ENCODE measurements at regions of chr15 and their contacts with region 1.

Region 1: GRCh38 chr15:83066734-83067637 is at the start of gene BTBD1:
- DNase-seq: peak; percentile 84
- ATAC-seq: peak; percentile 98
- H3K4me3 ChIP-seq: peak within 1 kb of the TSS; percentile 71 to 92 (median 81)
- H3K27ac ChIP-seq: peak within 1 kb of the TSS; percentile 87
- H3K4me1 ChIP-seq: peaks cover 40% of the 10 kb centered on the region
- H3K27me3 ChIP-seq: no peaks in the 10 kb centered on the region
- CTCF ChIP-seq: peak; percentile 42
- EP300 ChIP-seq: peak in 1 of 2 experiments; percentile 26; a peak in 1 of 4 replicates
- POLR2A ChIP-seq: peak; percentile 90 to 93
- RAD21 ChIP-seq: peak; percentile 17; the same call in 1 of the 2 replicates
- total RNA-seq, gene BTBD1: 53.9 and 73.8 TPM in 2 replicates

Region 2: GRCh38 chr15:83011271-83012075 is 55.5 kb before region 1 on chr15 and contains the start of gene C15orf40:
- CTCF ChIA-PET with region 1: no interaction called
- POLR2A ChIA-PET with region 1: interaction called, 15 read pairs
- in situ Hi-C with region 1: no loop called
- intact Hi-C with region 1: no loop called
- DNase-seq: peak; percentile 81
- ATAC-seq: peak; percentile 96
- H3K4me3 ChIP-seq: peak within 1 kb of the TSS; percentile 63 to 88 (median 66)
- H3K27ac ChIP-seq: peak within 1 kb of the TSS; percentile 63
- H3K4me1 ChIP-seq: peaks cover 33% of the 10 kb centered on the region
- H3K27me3 ChIP-seq: no peaks in the 10 kb centered on the region
- CTCF ChIP-seq: peak; percentile 96
- EP300 ChIP-seq: no peak
- POLR2A ChIP-seq: peak; percentile 77 to 86
- RAD21 ChIP-seq: peak; percentile 61
- total RNA-seq, gene C15orf40: 24.0 and 25.5 TPM in 2 replicates

Region 3: GRCh38 chr15:83100097-83100646 is 33.2 kb after region 1 on chr15:
- CTCF ChIA-PET with region 1: no interaction called
- POLR2A ChIA-PET with region 1: no interaction called
- in situ Hi-C with region 1: no loop called
- intact Hi-C with region 1: no loop called
- DNase-seq: no peak
- ATAC-seq: no peak
- H3K4me3 ChIP-seq: no peak overlapping the region
- H3K27ac ChIP-seq: no peak overlapping the region
- H3K4me1 ChIP-seq: no peaks in the 10 kb centered on the region
- H3K27me3 ChIP-seq: no peaks in the 10 kb centered on the region; a peak in 1 of 5 replicates
- CTCF ChIP-seq: no peak
- EP300 ChIP-seq: no peak
- POLR2A ChIP-seq: no peak
- RAD21 ChIP-seq: no peak

Region 4: GRCh38 chr15:83207622-83208411 is 140.8 kb after region 1 on chr15 and contains the start of gene HDGFL3:
- CTCF ChIA-PET with region 1: no interaction called
- POLR2A ChIA-PET with region 1: no interaction called
- in situ Hi-C with region 1: no loop called
- intact Hi-C with region 1: loop called (anchors 5 kb)
- DNase-seq: no peak
- ATAC-seq: peak; percentile 78
- H3K4me3 ChIP-seq: peak within 1 kb of the TSS in 2 of 3 experiments; percentile 34 to 52; a peak in 3 of 6 replicates
- H3K27ac ChIP-seq: no peak within 1 kb of the TSS
- H3K4me1 ChIP-seq: no peaks in the 10 kb centered on the region
- H3K27me3 ChIP-seq: peaks cover 3 to 35% of the 10 kb centered on the region in 2 experiments; a peak in 4 of 5 replicates
- CTCF ChIP-seq: peak; percentile 23; the same call in 1 of the 2 replicates
- EP300 ChIP-seq: no peak
- POLR2A ChIP-seq: no peak
- RAD21 ChIP-seq: no peak
- total RNA-seq, gene HDGFL3: 0.07 and 0.09 TPM in 2 replicates

Measured in HepG2 (cell line).